Dorsolateral prefrontal cortex (tissue), 120 donors: ENCODE measurements at regions of chr2 and their contacts with region 1.

Region 1: GRCh38 chr2:127049927-127050802 is 56.8 kb downstream of the BIN1 start:
- DNase-seq: peak; percentile 63 to 85 (median 75)
- H3K4me3 ChIP-seq: no peak overlapping the region
- H3K27ac ChIP-seq: peak overlapping the region in 58 of 59 donors; percentile 18 to 98 (median 86)
- H3K27me3 ChIP-seq: no peaks in the 10 kb centered on the region
- CTCF ChIP-seq: peak; percentile 76 to 99 (median 96)

Region 2: DNA sequence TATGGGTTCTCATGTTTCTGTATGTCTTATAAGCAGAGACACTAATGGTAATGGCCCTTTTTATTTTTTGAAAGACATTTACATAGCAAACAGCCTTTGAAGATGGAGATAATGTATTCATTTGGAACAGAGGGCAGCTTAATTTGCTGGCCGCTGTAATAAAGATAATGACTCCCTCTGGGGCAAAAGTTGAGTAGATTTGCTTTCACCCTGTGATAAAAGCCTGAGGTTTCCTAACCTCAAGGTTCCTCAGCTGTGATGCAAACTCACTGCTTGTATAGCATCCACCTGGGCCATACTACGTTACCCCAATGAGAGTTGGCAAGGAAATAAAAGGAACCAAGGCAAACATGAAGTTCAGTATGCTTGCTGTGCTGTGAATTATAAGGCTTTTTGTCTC is 96.7 kb before region 1 on chr2:
- intact Hi-C with region 1: no loop called
- DNase-seq: no peak
- H3K4me3 ChIP-seq: no peak overlapping the region
- H3K27ac ChIP-seq: no peak overlapping the region
- H3K27me3 ChIP-seq: peaks cover 0 to 8% (median 0%) of the 10 kb centered on the region in 45 donors
- CTCF ChIP-seq: no peak

Region 3: DNA sequence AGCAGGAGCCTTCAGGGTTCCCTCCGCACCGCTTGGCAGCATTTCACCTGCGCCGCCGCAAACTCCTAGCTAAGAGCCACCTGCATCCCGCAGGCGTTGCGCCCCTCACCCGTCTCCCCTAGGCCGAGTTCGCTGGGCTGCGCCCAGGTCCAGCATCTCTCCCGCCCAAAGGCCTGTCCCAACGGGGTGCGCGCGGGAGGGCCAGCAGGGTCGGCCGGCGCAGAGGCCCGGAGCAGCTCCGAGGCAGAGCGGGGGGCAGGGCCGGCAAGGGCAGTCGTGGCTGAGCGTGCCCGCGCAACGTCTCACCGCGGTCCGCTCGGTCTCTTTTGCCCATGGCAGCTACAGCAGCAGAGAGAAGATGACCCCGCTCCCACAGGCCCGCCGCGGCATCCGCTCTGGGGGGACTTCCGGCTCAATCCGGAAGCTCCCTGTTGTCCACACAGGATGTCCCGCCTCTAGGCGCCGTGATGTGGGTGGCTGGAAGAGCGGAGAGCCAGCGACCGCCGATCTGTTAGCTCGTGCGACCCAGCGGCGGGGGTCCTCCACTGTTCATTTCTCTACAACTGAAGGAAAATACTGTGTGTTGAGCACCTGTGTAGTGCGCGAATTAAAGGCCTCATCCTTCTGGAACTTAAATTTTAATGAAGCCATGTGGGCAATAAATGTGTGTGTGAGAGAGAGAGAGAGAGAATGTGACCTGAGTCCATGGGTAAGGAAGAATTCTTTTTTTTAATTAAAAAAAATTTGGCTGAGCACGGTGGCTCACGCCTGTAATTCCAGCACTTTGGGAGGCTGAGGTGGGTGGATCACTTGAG is 243.8 kb after region 1 on chr2 and contains the start of gene ERCC3:
- intact Hi-C with region 1: loop called (anchors 10 kb)
- DNase-seq: peak; percentile 72 to 91 (median 84)
- H3K4me3 ChIP-seq: peak within 1 kb of the TSS; percentile 68 to 99 (median 95)
- H3K27ac ChIP-seq: peak within 1 kb of the TSS; percentile 6 to 90 (median 76)
- H3K27me3 ChIP-seq: no peaks in the 10 kb centered on the region
- CTCF ChIP-seq: peak in 24 of 56 donors; percentile 3 to 51 (median 22)
- total RNA-seq, gene ERCC3: 44.4 to 79.5 (median 59.7) TPM